ENCODE measurements at regions of chr4 and their contacts with region 1.

Region 1: DNA sequence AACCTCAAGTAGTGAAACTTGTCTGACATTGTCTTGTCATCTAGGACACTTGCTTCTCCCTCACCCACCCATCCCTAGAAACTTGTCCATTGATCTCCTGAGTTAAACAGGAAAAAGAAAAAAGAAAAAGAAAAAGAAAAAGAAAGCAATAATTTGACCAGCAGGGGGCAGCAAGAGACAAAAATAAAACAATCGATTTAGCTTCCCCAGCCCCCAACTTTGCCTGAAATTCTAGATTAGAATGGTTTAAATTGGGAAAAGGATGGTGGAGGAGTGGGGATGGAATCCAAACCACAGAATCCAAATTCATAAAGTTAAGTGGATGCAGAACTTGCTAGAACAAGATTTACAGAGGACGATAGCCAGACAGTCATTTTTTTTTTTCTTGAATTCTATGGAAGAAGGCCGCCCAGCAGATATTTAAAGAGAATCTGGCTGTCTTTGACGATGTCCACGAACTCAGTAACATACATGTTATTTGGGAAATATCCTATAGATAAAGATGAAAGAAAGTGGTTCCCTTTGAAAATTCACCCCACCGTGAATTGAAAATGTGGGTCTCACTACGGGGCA is 282.9 kb downstream of the USP46 start:
- DNase-seq: peak in 4 of 5 donors; percentile 12 to 27 (median 24)
- H3K4me3 ChIP-seq: no peak overlapping the region
- H3K4me3 Mint-ChIP-seq: no peak overlapping the region
- H3K27ac ChIP-seq: no peak overlapping the region
- H3K27ac Mint-ChIP-seq: no peak overlapping the region
- H3K4me1 ChIP-seq: no peaks in the 10 kb centered on the region
- H3K4me1 Mint-ChIP-seq: no peaks in the 10 kb centered on the region
- H3K27me3 ChIP-seq: no peaks in the 10 kb centered on the region
- H3K27me3 Mint-ChIP-seq: peaks cover 2 to 8% of the 10 kb centered on the region in 2 donors

Region 2: GRCh38 chr4:52001616-52002015 is 374.6 kb before region 1 on chr4:
- CTCF ChIA-PET with region 1: no interaction called
- POLR2A ChIA-PET with region 1: no interaction called
- intact Hi-C with region 1: no loop called
- DNase-seq: no peak
- H3K4me3 ChIP-seq: no peak overlapping the region
- H3K4me3 Mint-ChIP-seq: no peak overlapping the region
- H3K27ac ChIP-seq: no peak overlapping the region
- H3K27ac Mint-ChIP-seq: no peak overlapping the region
- H3K4me1 ChIP-seq: no peaks in the 10 kb centered on the region
- H3K4me1 Mint-ChIP-seq: no peaks in the 10 kb centered on the region
- H3K27me3 ChIP-seq: no peaks in the 10 kb centered on the region
- H3K27me3 Mint-ChIP-seq: no peaks in the 10 kb centered on the region

Region 3: GRCh38 chr4:52665592-52665991 is 289.4 kb after region 1 on chr4:
- CTCF ChIA-PET with region 1: interaction called, 23 read pairs
- POLR2A ChIA-PET with region 1: no interaction called
- intact Hi-C with region 1: no loop called
- DNase-seq: peak in 4 of 5 donors; percentile 14 to 31 (median 28)
- H3K4me3 ChIP-seq: no peak overlapping the region
- H3K4me3 Mint-ChIP-seq: no peak overlapping the region
- H3K27ac ChIP-seq: no peak overlapping the region
- H3K27ac Mint-ChIP-seq: peak overlapping the region in 1 of 7 donors; percentile 19
- H3K4me1 ChIP-seq: peaks cover 2% of the 10 kb centered on the region
- H3K4me1 Mint-ChIP-seq: peaks cover 4 to 10% (median 7%) of the 10 kb centered on the region in 4 donors
- H3K27me3 ChIP-seq: no peaks in the 10 kb centered on the region
- H3K27me3 Mint-ChIP-seq: peaks cover 6 to 10% of the 10 kb centered on the region in 2 donors

Region 4: GRCh38 chr4:52983563-52984303 is 607.5 kb after region 1 on chr4:
- CTCF ChIA-PET with region 1: interaction called, 16 read pairs
- POLR2A ChIA-PET with region 1: no interaction called
- intact Hi-C with region 1: no loop called
- DNase-seq: peak in 4 of 5 donors; percentile 37 to 50 (median 40)
- H3K4me3 ChIP-seq: no peak overlapping the region
- H3K4me3 Mint-ChIP-seq: no peak overlapping the region
- H3K27ac ChIP-seq: no peak overlapping the region
- H3K27ac Mint-ChIP-seq: no peak overlapping the region
- H3K4me1 ChIP-seq: no peaks in the 10 kb centered on the region
- H3K4me1 Mint-ChIP-seq: peaks cover 0 to 4% (median 0%) of the 10 kb centered on the region in 4 donors
- H3K27me3 ChIP-seq: no peaks in the 10 kb centered on the region
- H3K27me3 Mint-ChIP-seq: no peaks in the 10 kb centered on the region

Region 5: DNA sequence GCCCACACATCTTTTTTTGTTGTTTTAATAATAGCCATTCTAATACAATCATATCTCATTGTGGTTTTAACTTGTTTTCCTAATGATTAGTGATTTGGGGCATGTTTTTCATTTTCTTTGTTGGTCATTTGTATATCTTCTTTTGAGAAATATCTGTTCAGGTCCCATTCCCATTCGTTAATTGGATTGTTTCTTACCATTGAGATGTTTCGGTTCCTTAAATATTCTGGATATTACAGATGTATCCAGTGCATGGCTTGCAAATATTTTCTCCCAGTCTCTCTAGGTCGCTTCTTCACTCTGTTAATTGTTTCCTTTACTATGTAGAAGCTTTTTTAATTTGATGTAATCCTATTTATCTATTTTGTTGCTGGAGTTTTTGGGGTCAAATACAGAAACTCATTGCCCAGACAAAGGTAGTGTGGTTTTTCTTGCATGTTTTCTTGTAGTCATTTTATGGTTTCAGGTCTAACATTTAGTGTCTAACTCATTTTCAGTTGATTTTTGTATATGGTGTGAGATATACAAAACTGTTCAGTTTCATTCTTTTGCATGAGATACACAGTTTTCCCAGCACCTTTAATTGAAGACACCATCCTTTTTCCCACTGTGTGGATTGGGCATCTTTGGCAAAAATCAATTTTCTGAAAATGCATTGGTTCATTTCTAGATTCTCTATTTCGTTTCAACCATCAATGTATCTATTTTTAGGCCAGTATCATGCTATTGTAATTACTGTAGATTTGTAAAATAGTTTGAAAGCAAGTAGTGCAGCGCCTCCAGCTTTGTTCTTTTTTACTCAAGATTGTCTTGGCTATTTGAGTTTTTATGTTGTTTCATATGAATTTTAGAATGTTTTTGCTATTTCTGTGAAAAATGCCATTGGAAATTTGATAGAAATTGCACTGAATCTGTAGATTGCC is 793.7 kb after region 1 on chr4:
- CTCF ChIA-PET with region 1: no interaction called
- POLR2A ChIA-PET with region 1: no interaction called
- intact Hi-C with region 1: no loop called
- DNase-seq: no peak
- H3K4me3 ChIP-seq: no peak overlapping the region
- H3K4me3 Mint-ChIP-seq: no peak overlapping the region
- H3K27ac ChIP-seq: no peak overlapping the region
- H3K27ac Mint-ChIP-seq: no peak overlapping the region
- H3K4me1 ChIP-seq: peaks cover 5% of the 10 kb centered on the region
- H3K4me1 Mint-ChIP-seq: peaks cover 6 to 11% (median 10%) of the 10 kb centered on the region in 4 donors
- H3K27me3 ChIP-seq: no peaks in the 10 kb centered on the region
- H3K27me3 Mint-ChIP-seq: no peaks in the 10 kb centered on the region